Activated T-helper 1 cell treated with anti-CD3 and anti-CD28 coated beads, Interleukin-12 subunit alpha, Interleukin-12 subunit beta, Interleukin-2, Interleukin-4 antibody, amounts not matched to agents 30 ng/mL and 10 ng/mL and 1 ng/mL, durations not matched to agents 14 hours and 24 hours and 36 hours (primary cell): ENCODE measurements at regions of chr11 and their contacts with region 1.

Region 1: GRCh38 chr11:116927163-116927974 is 89.9 kb upstream of the APOA1 start:
- DNase-seq: peak; percentile 5
- H3K4me3 Mint-ChIP-seq: peak overlapping the region; percentile 8
- H3K27ac Mint-ChIP-seq: peak overlapping the region; percentile 67
- H3K4me1 Mint-ChIP-seq: peaks cover 74% of the 10 kb centered on the region
- H3K27me3 Mint-ChIP-seq: no peaks in the 10 kb centered on the region

Region 2: GRCh38 chr11:116913000-116913399 is 14.4 kb before region 1 on chr11:
- intact Hi-C with region 1: no loop called
- DNase-seq: no peak
- H3K4me3 Mint-ChIP-seq: no peak overlapping the region
- H3K27ac Mint-ChIP-seq: no peak overlapping the region
- H3K4me1 Mint-ChIP-seq: peaks cover 6% of the 10 kb centered on the region
- H3K27me3 Mint-ChIP-seq: no peaks in the 10 kb centered on the region

Region 3: GRCh38 chr11:116948391-116948790 is 21.0 kb after region 1 on chr11:
- intact Hi-C with region 1: loop called (anchors 1 kb)
- DNase-seq: peak; percentile 10
- H3K4me3 Mint-ChIP-seq: no peak overlapping the region
- H3K27ac Mint-ChIP-seq: peak overlapping the region; percentile 0
- H3K4me1 Mint-ChIP-seq: peaks cover 30% of the 10 kb centered on the region
- H3K27me3 Mint-ChIP-seq: no peaks in the 10 kb centered on the region

Region 4: DNA sequence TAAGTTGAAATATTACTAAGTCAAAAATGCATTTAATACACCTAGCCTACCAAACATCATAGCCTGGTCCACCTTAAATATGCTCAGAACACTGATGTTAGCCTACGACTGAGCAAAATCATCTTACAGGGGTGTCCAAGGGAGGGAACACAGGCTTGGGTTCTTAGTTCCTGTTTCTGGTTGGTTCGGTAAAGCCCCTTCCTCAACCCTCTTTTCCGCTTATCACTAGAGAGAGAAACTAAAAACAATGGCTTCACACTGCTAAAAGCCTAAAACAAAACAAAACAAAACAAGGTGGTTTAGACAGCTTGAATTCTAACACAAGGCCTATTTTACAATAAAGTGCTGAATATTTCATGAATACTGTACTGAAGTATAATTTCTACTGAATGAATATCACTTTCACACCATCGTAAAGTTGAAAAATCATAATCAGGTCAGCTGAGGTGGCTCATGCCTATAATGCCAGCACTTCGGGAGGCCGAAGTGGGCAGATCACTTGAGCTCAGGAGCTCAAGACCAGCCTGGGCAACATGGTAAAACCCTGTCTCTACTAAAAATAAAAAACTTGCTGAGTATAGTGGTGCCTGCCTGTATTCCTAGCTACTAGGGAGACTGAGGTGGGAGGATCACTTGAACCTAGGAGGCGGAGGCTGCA is 52.9 kb after region 1 on chr11:
- intact Hi-C with region 1: no loop called
- DNase-seq: no peak
- H3K4me3 Mint-ChIP-seq: peak overlapping the region; percentile 8
- H3K27ac Mint-ChIP-seq: peak overlapping the region; percentile 42
- H3K4me1 Mint-ChIP-seq: peaks cover 42% of the 10 kb centered on the region
- H3K27me3 Mint-ChIP-seq: no peaks in the 10 kb centered on the region

Region 5: GRCh38 chr11:117010808-117011540 is 83.6 kb after region 1 on chr11:
- intact Hi-C with region 1: loop called (anchors 1 kb)
- DNase-seq: no peak
- H3K4me3 Mint-ChIP-seq: no peak overlapping the region
- H3K27ac Mint-ChIP-seq: peak overlapping the region; percentile 78
- H3K4me1 Mint-ChIP-seq: peaks cover 38% of the 10 kb centered on the region
- H3K27me3 Mint-ChIP-seq: no peaks in the 10 kb centered on the region

Region 6: DNA sequence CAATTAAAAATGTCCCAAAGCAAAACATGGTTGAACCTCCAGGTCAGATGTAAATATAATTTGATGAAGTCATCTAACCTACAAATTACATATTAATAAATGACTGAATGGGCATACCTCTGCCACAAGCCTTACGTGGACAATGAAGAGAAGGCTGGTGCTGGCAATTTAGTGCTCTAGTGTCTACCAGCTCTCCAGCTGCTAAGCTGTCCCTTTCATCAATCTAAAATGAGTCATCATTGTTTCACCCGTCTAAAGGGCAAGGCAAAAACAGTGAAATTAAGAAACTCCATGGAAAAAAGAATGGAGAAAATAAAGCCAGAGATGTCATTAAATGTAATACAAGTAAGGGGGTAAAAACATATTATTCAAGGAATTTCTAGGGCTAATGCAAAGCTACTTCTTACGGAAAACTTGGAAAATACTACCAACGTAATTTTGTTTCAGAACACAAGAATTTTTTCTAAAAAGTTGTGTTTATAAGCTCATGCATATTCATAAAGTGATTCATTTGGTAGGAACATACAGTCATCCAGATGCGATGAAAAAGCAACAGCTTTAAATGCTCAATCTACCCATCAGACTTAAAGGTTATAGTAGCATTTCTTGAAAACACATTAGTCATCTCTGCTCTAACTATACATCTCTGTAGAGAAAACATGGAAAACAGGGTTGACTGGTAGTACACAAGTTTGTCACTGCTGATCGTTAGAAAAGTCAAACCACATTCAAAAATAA is 99.4 kb after region 1 on chr11:
- intact Hi-C with region 1: loop called (anchors 1 kb)
- DNase-seq: no peak
- H3K4me3 Mint-ChIP-seq: peak overlapping the region; percentile 38
- H3K27ac Mint-ChIP-seq: peak overlapping the region; percentile 90
- H3K4me1 Mint-ChIP-seq: peaks cover 63% of the 10 kb centered on the region
- H3K27me3 Mint-ChIP-seq: no peaks in the 10 kb centered on the region

Region 7: GRCh38 chr11:117098269-117099232 is 171.2 kb after region 1 on chr11 and contains the start of gene SIK3:
- intact Hi-C with region 1: loop called (anchors 1 kb)
- DNase-seq: peak; percentile 90
- H3K4me3 Mint-ChIP-seq: peak within 1 kb of the TSS; percentile 100
- H3K27ac Mint-ChIP-seq: peak within 1 kb of the TSS; percentile 99
- H3K4me1 Mint-ChIP-seq: peaks cover 50% of the 10 kb centered on the region
- H3K27me3 Mint-ChIP-seq: peaks cover 3% of the 10 kb centered on the region
- total RNA-seq, gene SIK3: 49.9 and 54.2 TPM in 2 replicates